ENCODE measurements at regions of chr19 and their contacts with region 1.

Region 1: GRCh38 chr19:19366612-19367396 is 38.7 kb upstream of the GATAD2A start:
- DNase-seq: peak; percentile 81
- H3K4me3 ChIP-seq: no peak overlapping the region
- H3K27ac ChIP-seq: peak overlapping the region; percentile 59
- H3K4me1 ChIP-seq: peaks cover 4% of the 10 kb centered on the region
- H3K27me3 ChIP-seq: no peaks in the 10 kb centered on the region
- CTCF ChIP-seq: peak; percentile 99

Region 2: GRCh38 chr19:19081642-19082151 is 285.1 kb before region 1 on chr19:
- intact Hi-C with region 1: no loop called
- DNase-seq: no peak
- H3K4me3 ChIP-seq: no peak overlapping the region
- H3K27ac ChIP-seq: no peak overlapping the region
- H3K4me1 ChIP-seq: no peaks in the 10 kb centered on the region
- H3K27me3 ChIP-seq: no peaks in the 10 kb centered on the region
- CTCF ChIP-seq: no peak

Region 3: DNA sequence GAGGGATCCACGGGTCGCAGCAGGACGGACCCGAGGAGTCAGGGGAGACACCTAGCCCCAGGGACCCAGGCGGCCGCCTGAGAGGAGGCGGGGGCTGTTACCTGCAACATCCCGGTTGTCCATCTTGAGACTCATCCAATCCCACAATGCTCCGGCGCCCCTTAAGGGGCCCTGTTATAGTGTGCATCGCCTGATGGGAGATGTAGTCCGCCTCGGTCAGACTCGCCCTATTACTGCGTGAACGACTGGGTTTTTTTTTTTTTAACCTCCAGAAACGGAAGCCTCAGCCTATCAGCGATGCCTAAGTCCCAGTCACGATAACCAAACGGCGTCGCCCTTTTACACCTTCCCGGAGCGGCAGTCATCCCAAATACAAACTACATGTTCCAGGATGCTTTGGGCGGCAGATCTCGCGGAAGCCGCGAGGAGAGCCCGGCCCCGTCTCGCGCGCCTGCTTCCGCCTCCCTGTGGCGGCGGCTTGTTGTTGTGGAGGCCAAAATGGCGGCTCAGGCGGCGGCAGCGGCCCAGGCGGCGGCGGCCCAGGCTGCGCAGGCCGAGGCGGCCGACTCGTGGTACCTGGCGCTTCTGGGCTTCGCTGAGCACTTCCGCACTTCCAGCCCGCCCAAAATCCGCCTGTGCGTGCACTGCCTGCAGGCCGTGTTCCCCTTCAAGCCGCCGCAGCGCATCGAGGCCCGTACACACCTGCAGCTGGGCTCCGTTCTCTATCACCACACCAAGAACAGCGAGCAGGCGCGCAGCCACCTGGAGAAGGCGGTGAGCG is 46.3 kb before region 1 on chr19 and contains the starts of genes MAU2 and SUGP1:
- intact Hi-C with region 1: no loop called
- DNase-seq: peak; percentile 90
- H3K4me3 ChIP-seq: peak within 1 kb of the TSS; percentile 97
- H3K27ac ChIP-seq: peak within 1 kb of the TSS; percentile 76
- H3K4me1 ChIP-seq: peaks cover 3% of the 10 kb centered on the region
- H3K27me3 ChIP-seq: no peaks in the 10 kb centered on the region
- CTCF ChIP-seq: no peak
- total RNA-seq, gene MAU2: 33.5 to 56.7 TPM
- total RNA-seq, gene SUGP1: 33.2 to 54.7 TPM

Region 4: DNA sequence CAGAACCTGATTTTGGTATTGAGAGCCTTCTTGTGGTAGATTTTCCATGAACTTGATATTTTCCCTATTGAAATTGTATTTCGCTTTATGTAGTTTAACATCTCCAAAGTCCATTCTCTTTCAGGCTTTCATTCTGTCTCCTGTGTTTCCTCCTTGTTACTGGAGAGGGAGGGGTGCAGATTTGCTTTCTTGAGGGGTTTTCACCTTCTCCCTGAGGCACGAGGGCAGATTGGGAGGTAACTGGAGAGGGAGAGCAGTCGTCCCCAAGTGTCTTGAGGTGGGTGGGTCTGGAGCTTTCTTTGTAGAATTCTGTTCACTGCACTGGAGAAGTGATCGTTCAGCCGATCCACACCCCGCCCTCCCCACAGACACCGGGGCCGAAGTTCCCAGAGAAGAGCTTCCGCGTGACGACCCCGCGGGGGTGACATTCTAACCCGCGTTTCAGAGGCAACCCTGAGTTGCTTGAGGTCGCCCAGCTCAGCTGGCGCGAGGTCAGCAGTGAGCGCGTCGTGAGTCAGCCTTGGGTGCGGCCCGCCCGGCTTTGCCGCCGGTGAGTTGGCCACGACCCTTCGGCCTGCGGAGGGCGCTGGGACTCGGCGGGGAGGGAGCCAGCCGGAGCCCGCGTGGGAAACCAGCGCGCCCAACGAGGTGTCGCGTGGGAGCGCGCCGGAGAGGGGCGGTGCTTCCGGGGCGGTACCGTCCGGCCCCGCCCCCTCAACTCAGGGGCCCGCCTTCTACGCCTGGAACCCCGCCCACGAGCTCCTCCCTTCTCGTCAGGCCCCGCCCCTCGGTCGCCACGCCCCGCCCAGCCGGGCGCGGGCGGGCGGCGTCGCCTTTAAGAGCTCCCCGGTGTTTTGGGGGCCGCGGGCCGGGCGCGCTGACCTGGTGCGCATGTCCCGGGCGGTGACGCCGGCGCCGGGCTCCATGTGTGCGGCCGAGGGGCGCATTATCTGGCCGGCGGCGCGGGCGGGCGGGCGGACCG is 38.4 kb after region 1 on chr19 and contains the start of gene GATAD2A:
- intact Hi-C with region 1: loop called (anchors 5 kb)
- DNase-seq: peak; percentile 96
- H3K4me3 ChIP-seq: peak within 1 kb of the TSS; percentile 76
- H3K27ac ChIP-seq: peak within 1 kb of the TSS; percentile 90
- H3K4me1 ChIP-seq: peaks cover 5% of the 10 kb centered on the region
- H3K27me3 ChIP-seq: no peaks in the 10 kb centered on the region
- CTCF ChIP-seq: no peak
- total RNA-seq, gene GATAD2A: 102 to 145 TPM